ENCODE measurements at regions of chr17 and their contacts with region 1.

Region 1: DNA sequence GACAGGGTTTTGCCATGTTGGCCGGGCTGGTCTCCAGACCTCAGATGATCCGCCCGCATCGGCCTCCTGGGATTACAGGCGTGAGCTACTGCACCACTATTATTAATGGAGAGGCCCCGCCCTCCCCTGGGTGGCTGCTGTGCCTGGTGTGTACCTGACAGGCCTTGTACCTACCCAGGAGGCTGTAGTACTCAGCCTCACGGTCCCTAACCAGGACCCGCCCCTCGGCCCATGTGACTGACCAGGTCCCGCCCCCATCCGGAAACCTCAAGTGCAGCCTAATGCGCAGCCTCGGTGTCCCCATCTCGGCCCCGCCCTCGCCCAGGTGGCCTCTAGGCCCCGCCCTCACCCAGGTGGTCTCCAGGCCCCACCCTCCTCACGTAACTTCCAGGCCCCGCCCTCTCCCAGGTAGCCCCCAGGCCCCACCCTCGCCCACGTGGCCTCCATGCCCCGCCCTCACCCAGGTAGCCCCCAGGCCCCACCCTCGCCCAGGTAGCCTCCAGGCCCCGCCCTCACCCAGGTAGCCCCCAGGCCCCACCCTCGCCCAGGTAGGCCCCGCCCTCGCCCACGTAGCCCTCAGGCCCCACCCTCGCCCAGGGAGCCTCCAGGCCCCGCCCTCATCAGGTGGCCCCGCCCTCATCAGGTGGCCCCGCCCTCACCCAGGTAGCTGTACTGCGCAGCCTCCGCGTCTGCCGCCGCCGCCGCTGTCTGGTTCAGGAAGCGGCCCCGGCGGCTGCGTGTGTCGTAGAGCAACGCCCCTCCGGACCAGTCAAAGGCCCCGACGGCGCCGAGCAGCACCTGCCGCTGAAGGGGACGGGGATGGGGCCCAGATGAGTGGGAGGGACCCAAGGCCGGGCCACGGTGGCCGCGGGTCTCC is 31.0 kb downstream of the HASPIN start:
- DNase-seq: peak; percentile 34 to 61 (median 40)
- H3K4me3 ChIP-seq: no peak overlapping the region
- H3K27ac ChIP-seq: no peak overlapping the region
- H3K4me1 ChIP-seq: no peaks in the 10 kb centered on the region
- H3K27me3 ChIP-seq: no peaks in the 10 kb centered on the region
- CTCF ChIP-seq: no peak
- EP300 ChIP-seq: no peak
- POLR2A ChIP-seq: no peak

Region 2: DNA sequence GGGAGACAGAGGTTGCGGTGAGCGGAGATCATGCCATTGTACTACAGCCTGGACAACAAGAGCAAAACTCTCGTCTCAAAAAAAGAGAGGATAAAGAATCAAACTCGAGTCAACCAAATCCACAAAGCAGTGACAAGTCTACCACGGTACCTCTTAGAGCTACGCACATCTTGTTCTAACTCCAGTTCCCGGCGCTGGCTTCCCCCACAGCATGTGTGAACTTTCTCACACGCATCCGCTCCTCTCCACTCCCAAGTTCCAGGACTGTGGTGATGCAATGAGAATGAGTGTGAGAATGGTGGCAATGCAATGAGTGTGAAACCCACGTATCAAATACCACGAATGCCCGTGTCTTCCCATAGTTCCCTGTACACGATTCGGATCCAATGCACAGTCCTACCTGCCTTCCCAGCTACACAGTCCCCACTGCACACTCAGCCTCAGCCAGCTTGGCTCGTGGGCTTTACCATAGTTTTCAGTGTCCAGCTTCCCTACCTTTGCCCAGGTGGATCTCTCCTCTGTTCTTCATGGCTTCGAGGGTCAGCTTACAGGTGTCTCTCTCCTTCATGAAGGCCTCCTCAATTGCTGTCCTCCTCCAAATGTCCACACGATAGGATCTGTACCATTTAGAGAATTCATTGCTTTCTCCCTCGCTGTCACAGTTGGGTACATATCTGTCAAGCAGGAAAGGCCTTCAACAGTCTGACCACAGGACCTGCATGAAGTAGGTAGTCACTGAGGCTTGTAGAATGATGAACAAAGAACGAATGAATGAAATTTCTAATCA is 49.6 kb before region 1 on chr17:
- intact Hi-C with region 1: no loop called
- DNase-seq: no peak
- H3K4me3 ChIP-seq: no peak overlapping the region
- H3K27ac ChIP-seq: no peak overlapping the region
- H3K4me1 ChIP-seq: no peaks in the 10 kb centered on the region
- H3K27me3 ChIP-seq: no peaks in the 10 kb centered on the region
- CTCF ChIP-seq: no peak
- EP300 ChIP-seq: no peak
- POLR2A ChIP-seq: no peak

Region 3: GRCh38 chr17:3732210-3732621 is 22.5 kb before region 1 on chr17:
- intact Hi-C with region 1: no loop called
- DNase-seq: no peak
- H3K4me3 ChIP-seq: no peak overlapping the region
- H3K27ac ChIP-seq: no peak overlapping the region
- H3K4me1 ChIP-seq: peaks cover 5% of the 10 kb centered on the region
- H3K27me3 ChIP-seq: no peaks in the 10 kb centered on the region
- CTCF ChIP-seq: no peak
- EP300 ChIP-seq: no peak
- POLR2A ChIP-seq: no peak

Region 4: GRCh38 chr17:3845621-3846441 is 91.1 kb after region 1 on chr17 and contains the start of gene NCBP3:
- intact Hi-C with region 1: loop called in 1 of 4 experiments (anchors 5 kb)
- DNase-seq: peak; percentile 86 to 93 (median 89)
- H3K4me3 ChIP-seq: peak within 1 kb of the TSS; percentile 100
- H3K27ac ChIP-seq: peak within 1 kb of the TSS; percentile 59 to 70
- H3K4me1 ChIP-seq: no peaks in the 10 kb centered on the region
- H3K27me3 ChIP-seq: no peaks in the 10 kb centered on the region
- CTCF ChIP-seq: peak; percentile 97 to 98 (median 98)
- EP300 ChIP-seq: no peak
- POLR2A ChIP-seq: peak; percentile 81
- total RNA-seq, gene NCBP3: 15.7 to 43.2 (median 37.6) TPM

Measured in ovary (tissue), 10 donors.